K562 (cell line): ENCODE measurements at regions of chr1 and their contacts with region 1.

Region 1: GRCh38 chr1:167687919-167688519 is 33.8 kb upstream of the MPZL1 start:
- DNase-seq: peak; percentile 80 to 89 (median 82)
- ATAC-seq: peak; percentile 88
- H3K4me3 ChIP-seq: no peak overlapping the region
- H3K27ac ChIP-seq: peak overlapping the region; percentile 46; the same call in 2 of the 3 replicates
- H3K4me1 ChIP-seq: peaks cover 9 to 15% of the 10 kb centered on the region in 2 experiments; a peak in 4 of 5 replicates
- H3K27me3 ChIP-seq: no peaks in the 10 kb centered on the region
- CTCF ChIP-seq: peak; percentile 89 to 98 (median 94)
- EP300 ChIP-seq: no peak; the same call in 1 of the 2 replicates
- POLR2A ChIP-seq: no peak
- RAD21 ChIP-seq: peak; percentile 96 to 98

Region 2: GRCh38 chr1:166017395-166017794 is 1670.6 kb before region 1 on chr1:
- CTCF ChIA-PET with region 1: no interaction called
- POLR2A ChIA-PET with region 1: no interaction called
- in situ Hi-C with region 1: loop called (anchors 25 kb)
- intact Hi-C with region 1: no loop called
- DNase-seq: peak in 2 of 4 experiments; percentile 51 to 56
- ATAC-seq: peak; percentile 95
- H3K4me3 ChIP-seq: no peak overlapping the region
- H3K27ac ChIP-seq: no peak overlapping the region
- H3K4me1 ChIP-seq: no peaks in the 10 kb centered on the region
- H3K27me3 ChIP-seq: peaks cover 0 to 3% of the 10 kb centered on the region in 2 experiments; a peak in 2 of 5 replicates
- CTCF ChIP-seq: peak; percentile 52 to 71 (median 57)
- EP300 ChIP-seq: no peak
- POLR2A ChIP-seq: no peak
- RAD21 ChIP-seq: 0 out of 4 replicates have a peak, but pooled peaks of 1 of the 2 experiments have one; percentile 22

Region 3: DNA sequence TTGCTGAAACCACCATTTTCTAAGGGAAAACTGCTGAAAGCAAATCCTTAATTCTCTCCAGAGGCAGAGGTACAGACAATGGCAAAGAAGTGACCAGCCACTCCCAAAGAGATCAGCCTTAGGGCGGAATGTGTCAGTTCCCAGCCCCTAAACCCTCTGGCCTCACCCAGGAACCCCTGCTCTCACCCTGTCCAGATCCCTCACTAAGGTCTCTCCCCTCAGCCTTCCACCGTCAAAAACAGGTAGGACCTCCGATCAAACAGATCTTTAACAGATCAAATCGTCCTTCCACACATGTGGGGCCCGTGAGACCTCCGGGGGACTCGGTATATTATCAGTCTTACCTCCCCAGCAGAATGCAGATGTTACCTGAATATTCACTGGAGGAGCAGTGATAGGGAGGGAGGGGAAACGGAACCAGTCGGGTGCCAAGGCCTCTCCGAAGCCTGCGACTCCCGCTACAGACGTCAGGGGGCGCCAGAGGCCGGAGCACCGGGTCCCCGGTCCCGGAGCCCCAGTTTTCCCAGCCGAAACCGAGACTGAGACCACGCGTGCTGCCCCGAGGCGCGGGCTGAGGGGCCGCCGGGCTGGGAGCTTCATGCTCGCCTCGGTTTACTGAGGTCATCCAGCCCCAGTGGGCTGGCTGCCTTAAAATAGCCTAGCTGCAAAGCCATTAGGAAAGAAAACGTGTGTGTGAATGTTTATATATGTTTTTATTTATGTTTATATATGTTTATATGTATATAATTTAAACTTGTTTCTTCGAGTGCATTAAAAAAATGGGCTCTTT is 621.5 kb before region 1 on chr1:
- CTCF ChIA-PET with region 1: interaction called, 13 read pairs
- POLR2A ChIA-PET with region 1: no interaction called
- in situ Hi-C with region 1: loop called (anchors 10 kb)
- intact Hi-C with region 1: loop called (anchors 5 kb)
- DNase-seq: peak; percentile 87 to 97 (median 94)
- ATAC-seq: peak; percentile 94
- H3K4me3 ChIP-seq: no peak overlapping the region
- H3K27ac ChIP-seq: no peak overlapping the region
- H3K4me1 ChIP-seq: peaks cover 0 to 9% of the 10 kb centered on the region in 2 experiments; a peak in 3 of 5 replicates
- H3K27me3 ChIP-seq: peaks cover 41 to 45% of the 10 kb centered on the region in 2 experiments
- CTCF ChIP-seq: peak; percentile 94 to 98 (median 97)
- EP300 ChIP-seq: no peak
- POLR2A ChIP-seq: no peak
- RAD21 ChIP-seq: peak; percentile 98

Region 4: DNA sequence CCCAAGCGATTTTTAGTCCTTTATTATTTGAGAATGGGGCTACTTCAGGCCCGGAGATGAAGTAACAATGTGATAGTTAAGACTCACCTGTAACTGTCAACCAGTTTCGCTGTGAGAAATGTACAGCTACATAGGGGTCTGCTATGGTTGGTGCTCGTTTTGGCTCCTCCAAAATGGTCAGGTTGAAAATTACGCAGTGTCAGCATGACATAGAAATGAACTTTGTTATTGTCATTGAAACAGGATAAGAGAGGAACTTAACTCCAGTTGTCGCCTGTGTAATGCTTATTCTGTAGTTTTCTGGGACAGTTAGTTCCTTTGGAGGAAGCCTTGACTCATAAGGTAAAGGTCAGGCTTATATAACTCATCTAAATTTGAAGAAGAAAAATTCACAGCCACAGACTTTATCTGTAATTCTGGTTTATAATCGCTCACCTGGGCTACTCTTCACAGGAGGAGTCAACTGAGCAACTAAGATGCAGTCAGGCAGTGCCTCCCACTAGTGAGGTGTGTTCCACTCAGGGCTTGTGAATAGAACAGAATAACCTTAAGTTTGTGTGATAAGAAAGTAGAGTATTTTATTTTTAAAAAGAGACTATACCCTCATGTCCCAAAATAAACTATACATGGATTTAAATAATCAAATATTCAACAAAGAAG is 300.6 kb before region 1 on chr1:
- CTCF ChIA-PET with region 1: no interaction called
- POLR2A ChIA-PET with region 1: no interaction called
- in situ Hi-C with region 1: no loop called
- intact Hi-C with region 1: no loop called
- DNase-seq: peak in 2 of 4 experiments; percentile 17 to 31
- ATAC-seq: peak; percentile 82
- H3K4me3 ChIP-seq: no peak overlapping the region
- H3K27ac ChIP-seq: peak overlapping the region; percentile 45; the same call in 1 of the 3 replicates
- H3K4me1 ChIP-seq: peaks cover 0 to 9% of the 10 kb centered on the region in 2 experiments; a peak in 2 of 5 replicates
- H3K27me3 ChIP-seq: no peaks in the 10 kb centered on the region
- CTCF ChIP-seq: no peak
- EP300 ChIP-seq: no peak
- POLR2A ChIP-seq: no peak
- RAD21 ChIP-seq: no peak

Region 5: DNA sequence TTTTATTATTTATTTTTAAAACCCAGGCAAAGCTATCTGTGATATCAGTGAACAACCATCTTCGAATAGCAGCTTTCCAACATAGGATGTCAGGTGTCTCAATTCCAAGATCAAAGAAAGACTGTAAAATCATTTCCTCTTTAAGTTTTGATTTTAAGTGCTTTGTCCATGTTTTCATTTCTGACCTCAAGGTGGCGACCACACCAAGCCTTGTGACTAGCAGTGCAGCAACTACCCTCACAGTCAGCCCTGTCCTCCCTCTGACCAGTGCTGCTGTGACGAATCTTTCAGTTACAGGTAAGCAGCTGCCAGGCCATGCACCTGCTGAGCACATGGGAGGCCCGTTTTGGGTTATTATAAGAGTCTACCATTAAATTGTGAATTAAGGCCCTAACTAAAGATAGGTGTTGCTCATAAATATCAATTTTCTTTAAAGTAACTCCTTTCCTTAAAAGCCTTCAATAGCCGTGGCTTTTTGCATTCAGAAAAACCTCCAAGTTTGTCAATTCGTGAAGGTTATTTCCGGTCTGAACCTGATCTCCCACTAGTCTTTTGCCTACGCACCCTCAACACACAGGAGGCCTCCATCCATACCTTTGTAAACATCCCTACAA is 286.7 kb before region 1 on chr1:
- CTCF ChIA-PET with region 1: interaction called, 10 read pairs
- POLR2A ChIA-PET with region 1: no interaction called
- in situ Hi-C with region 1: no loop called
- intact Hi-C with region 1: no loop called
- DNase-seq: peak; percentile 38 to 78 (median 58)
- ATAC-seq: peak; percentile 99
- H3K4me3 ChIP-seq: no peak overlapping the region
- H3K27ac ChIP-seq: no peak overlapping the region
- H3K4me1 ChIP-seq: no peaks in the 10 kb centered on the region
- H3K27me3 ChIP-seq: no peaks in the 10 kb centered on the region
- CTCF ChIP-seq: peak; percentile 75 to 91 (median 86)
- EP300 ChIP-seq: no peak
- POLR2A ChIP-seq: no peak
- RAD21 ChIP-seq: peak; percentile 89

Region 6: GRCh38 chr1:167533851-167534300 is 154.1 kb before region 1 on chr1:
- CTCF ChIA-PET with region 1: no interaction called
- POLR2A ChIA-PET with region 1: interaction called, 5 read pairs
- in situ Hi-C with region 1: no loop called
- intact Hi-C with region 1: loop called (anchors 5 kb)
- DNase-seq: peak; percentile 86 to 88 (median 87)
- ATAC-seq: peak; percentile 94
- H3K4me3 ChIP-seq: no peak overlapping the region
- H3K27ac ChIP-seq: no peak overlapping the region
- H3K4me1 ChIP-seq: no peaks in the 10 kb centered on the region; a peak in 2 of 5 replicates
- H3K27me3 ChIP-seq: peaks cover 0 to 8% of the 10 kb centered on the region in 2 experiments; a peak in 1 of 5 replicates
- CTCF ChIP-seq: peak; percentile 88 to 97 (median 96)
- EP300 ChIP-seq: no peak
- POLR2A ChIP-seq: no peak
- RAD21 ChIP-seq: peak; percentile 92 to 95

Region 7: DNA sequence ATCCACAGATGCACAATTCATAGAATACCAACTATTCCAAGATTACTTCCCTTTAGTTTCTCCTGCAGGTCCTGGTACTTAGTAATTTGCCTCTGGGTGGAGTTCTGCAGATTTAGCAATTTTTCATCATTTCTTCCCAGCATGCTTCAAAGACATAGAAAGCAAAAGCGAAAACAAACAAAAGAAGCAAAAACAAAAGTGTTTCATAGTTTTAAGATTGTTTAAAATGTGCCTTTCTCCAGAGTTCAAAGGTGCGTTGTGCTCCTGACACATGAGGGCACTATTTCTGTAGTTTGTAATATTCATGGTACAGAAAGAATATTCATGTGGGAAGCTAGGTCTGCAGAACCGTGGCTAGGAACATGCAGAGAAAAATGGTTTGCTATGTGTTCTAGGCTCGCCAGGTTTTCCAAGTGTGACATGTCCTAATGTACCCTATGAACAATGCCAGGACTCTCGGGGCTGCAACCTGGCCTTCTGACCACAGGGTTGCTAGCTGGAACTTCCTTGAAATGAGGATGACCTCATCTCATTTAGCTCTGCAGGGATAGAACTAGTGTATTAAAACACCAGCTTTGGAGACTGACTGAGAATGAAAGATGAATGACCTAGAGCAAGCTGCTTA is 88.0 kb before region 1 on chr1:
- CTCF ChIA-PET with region 1: interaction called, 45 read pairs
- POLR2A ChIA-PET with region 1: interaction called, 5 read pairs
- in situ Hi-C with region 1: loop called (anchors 5 kb)
- intact Hi-C with region 1: loop called (anchors 1 kb)
- DNase-seq: peak; percentile 46 to 72 (median 57)
- ATAC-seq: peak; percentile 87
- H3K4me3 ChIP-seq: no peak overlapping the region
- H3K27ac ChIP-seq: 0 out of 3 replicates have a peak overlapping the region, but pooled peaks have one; percentile 19
- H3K4me1 ChIP-seq: peaks cover 13 to 22% of the 10 kb centered on the region in 2 experiments; a peak in 4 of 5 replicates
- H3K27me3 ChIP-seq: no peaks in the 10 kb centered on the region
- CTCF ChIP-seq: peak; percentile 61 to 91 (median 80)
- EP300 ChIP-seq: no peak; the same call in 1 of the 2 replicates
- POLR2A ChIP-seq: no peak
- RAD21 ChIP-seq: peak; percentile 93 to 97

Region 8: GRCh38 chr1:167899253-167899681 is 211.2 kb after region 1 on chr1:
- CTCF ChIA-PET with region 1: no interaction called
- POLR2A ChIA-PET with region 1: no interaction called
- in situ Hi-C with region 1: no loop called
- intact Hi-C with region 1: no loop called
- DNase-seq: no peak
- ATAC-seq: 0 out of 3 replicates have a peak, but pooled peaks have one; percentile 11
- H3K4me3 ChIP-seq: no peak overlapping the region
- H3K27ac ChIP-seq: no peak overlapping the region
- H3K4me1 ChIP-seq: peaks cover 4 to 5% of the 10 kb centered on the region in 2 experiments; a peak in 3 of 5 replicates
- H3K27me3 ChIP-seq: no peaks in the 10 kb centered on the region
- CTCF ChIP-seq: no peak
- EP300 ChIP-seq: no peak
- POLR2A ChIP-seq: no peak
- RAD21 ChIP-seq: no peak

Region 9: GRCh38 chr1:168082008-168082876 is 394.2 kb after region 1 on chr1:
- CTCF ChIA-PET with region 1: no interaction called
- POLR2A ChIA-PET with region 1: no interaction called
- in situ Hi-C with region 1: no loop called
- intact Hi-C with region 1: loop called (anchors 10 kb)
- DNase-seq: peak; percentile 78 to 87 (median 81)
- ATAC-seq: peak; percentile 92
- H3K4me3 ChIP-seq: no peak overlapping the region
- H3K27ac ChIP-seq: no peak overlapping the region; the same call in 2 of the 3 replicates
- H3K4me1 ChIP-seq: peaks cover 8 to 9% of the 10 kb centered on the region in 2 experiments; a peak in 4 of 5 replicates
- H3K27me3 ChIP-seq: no peaks in the 10 kb centered on the region
- CTCF ChIP-seq: peak; percentile 90 to 98 (median 96)
- EP300 ChIP-seq: no peak
- POLR2A ChIP-seq: no peak
- RAD21 ChIP-seq: peak; percentile 62 to 89